ENCODE measurements at regions of chr1 and their contacts with region 1.

Region 1: GRCh38 chr1:1615256-1616044 is at the start of gene MIB2:
- DNase-seq: peak; percentile 100
- ATAC-seq: peak; percentile 85
- H3K4me3 ChIP-seq: peak within 1 kb of the TSS; percentile 94
- H3K27ac ChIP-seq: peak within 1 kb of the TSS; percentile 97
- H3K4me1 ChIP-seq: peaks cover 28% of the 10 kb centered on the region
- H3K27me3 ChIP-seq: no peaks in the 10 kb centered on the region
- CTCF ChIP-seq: no peak
- total RNA-seq, gene MIB2: 164 and 218 TPM in 2 replicates

Region 2: DNA sequence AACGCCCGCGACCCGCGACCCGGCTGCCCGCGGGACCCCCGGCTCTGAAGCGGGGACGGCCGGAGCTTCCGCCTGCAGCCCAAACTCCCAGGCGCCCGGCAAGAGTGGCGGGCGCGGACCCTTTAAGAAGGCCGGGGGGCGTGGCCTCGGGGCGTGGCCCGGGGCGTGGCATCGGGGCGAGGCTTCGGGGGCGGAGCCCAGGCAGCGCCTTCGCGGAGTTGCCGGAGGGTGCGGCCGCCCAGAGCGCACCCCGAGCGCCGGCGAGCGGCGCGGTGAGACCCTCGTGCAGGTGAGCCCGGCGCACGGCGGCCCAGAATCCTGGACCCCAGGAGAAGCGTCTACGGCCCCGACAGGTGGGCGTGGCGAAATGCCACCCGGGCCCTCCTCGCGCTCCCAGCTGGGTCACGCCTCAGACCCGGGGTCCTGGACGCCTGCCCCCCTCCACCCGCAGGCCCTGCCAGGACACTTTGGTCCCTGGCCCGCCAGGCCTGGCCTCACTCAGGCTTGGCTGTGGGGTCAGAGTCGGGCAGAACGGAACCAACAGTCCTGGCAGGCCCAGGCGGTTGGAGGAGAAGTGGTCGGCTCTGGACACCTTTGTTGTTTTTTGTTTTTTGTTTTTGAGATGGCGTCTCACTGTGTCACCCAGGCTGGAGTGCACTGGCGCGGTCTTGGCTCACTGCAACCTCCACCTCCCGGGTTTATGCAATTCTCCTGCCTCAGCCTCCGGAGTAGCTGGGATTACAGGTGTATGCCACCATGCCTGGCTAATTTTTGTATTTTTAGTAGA is 555.8 kb before region 1 on chr1:
- CTCF ChIA-PET with region 1: no interaction called
- POLR2A ChIA-PET with region 1: no interaction called
- intact Hi-C with region 1: loop called (anchors 10 kb)
- DNase-seq: peak; percentile 97
- ATAC-seq: peak; percentile 55
- H3K4me3 ChIP-seq: peak overlapping the region; percentile 85
- H3K27ac ChIP-seq: no peak overlapping the region
- H3K4me1 ChIP-seq: peaks cover 52% of the 10 kb centered on the region
- H3K27me3 ChIP-seq: no peaks in the 10 kb centered on the region
- CTCF ChIP-seq: no peak

Region 3: DNA sequence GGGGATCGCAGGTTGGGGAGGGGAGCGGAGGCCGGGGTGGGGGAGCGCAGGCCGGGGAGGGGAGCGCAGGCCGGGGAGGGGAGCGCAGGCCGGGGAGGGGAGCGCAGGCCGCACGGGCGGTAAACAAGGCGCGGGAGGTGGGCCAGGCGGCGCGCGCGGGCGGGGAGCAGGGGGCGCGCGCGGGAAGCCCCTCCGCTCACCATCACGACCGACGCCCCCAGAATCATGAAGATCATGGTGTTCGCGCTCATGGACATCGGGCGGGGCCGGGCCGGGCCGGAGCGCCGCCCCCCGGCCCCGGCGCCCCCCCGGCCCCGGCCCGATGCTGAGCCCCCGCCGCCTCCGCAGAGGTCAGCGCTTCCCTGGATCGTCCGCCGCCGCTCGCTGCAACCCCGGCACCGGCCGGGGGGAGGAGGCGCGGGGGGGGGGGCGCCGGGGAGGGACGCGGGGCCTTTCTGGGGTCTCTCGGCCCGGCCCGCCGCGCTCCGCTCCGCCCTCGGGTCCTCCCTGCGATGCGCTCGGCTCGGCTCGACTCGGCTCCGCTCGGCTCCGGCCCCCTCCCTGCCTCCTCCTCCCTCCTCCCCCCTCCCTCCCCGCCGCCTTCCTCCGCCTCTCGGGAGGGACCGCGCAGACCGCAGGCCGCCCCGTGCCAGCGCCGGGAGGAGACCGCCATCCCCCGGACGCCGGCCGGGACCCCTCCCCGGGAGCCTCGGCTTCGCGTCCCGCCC is 75.2 kb before region 1 on chr1 and contains the start of gene TMEM240:
- CTCF ChIA-PET with region 1: no interaction called
- POLR2A ChIA-PET with region 1: no interaction called
- intact Hi-C with region 1: no loop called
- DNase-seq: no peak
- ATAC-seq: peak; percentile 39
- H3K4me3 ChIP-seq: no peak within 1 kb of the TSS
- H3K27ac ChIP-seq: no peak within 1 kb of the TSS
- H3K4me1 ChIP-seq: no peaks in the 10 kb centered on the region
- H3K27me3 ChIP-seq: no peaks in the 10 kb centered on the region
- CTCF ChIP-seq: no peak
- total RNA-seq, gene TMEM240: 0.87 and 2.0 TPM in 2 replicates

Region 4: GRCh38 chr1:1954831-1955441 is 339.5 kb after region 1 on chr1:
- CTCF ChIA-PET with region 1: no interaction called
- POLR2A ChIA-PET with region 1: no interaction called
- intact Hi-C with region 1: no loop called
- DNase-seq: no peak
- ATAC-seq: no peak
- H3K4me3 ChIP-seq: no peak overlapping the region
- H3K27ac ChIP-seq: no peak overlapping the region
- H3K4me1 ChIP-seq: peaks cover 6% of the 10 kb centered on the region; the same call in 1 of the 2 replicates
- H3K27me3 ChIP-seq: peaks cover 13% of the 10 kb centered on the region
- CTCF ChIP-seq: 0 out of 2 replicates have a peak, but pooled peaks have one; percentile 25